ENCODE measurements at regions of chr20 and their contacts with region 1.

Region 1: GRCh38 chr20:45293041-45294002 is 13.3 kb upstream of the RBPJL start:
- DNase-seq: peak; percentile 91
- ATAC-seq: peak; percentile 92
- H3K4me3 Mint-ChIP-seq: peak overlapping the region; percentile 69
- H3K27ac Mint-ChIP-seq: no peak overlapping the region
- H3K4me1 Mint-ChIP-seq: peaks cover 2% of the 10 kb centered on the region
- H3K27me3 Mint-ChIP-seq: peaks cover 31% of the 10 kb centered on the region
- CTCF ChIP-seq: peak; percentile 98

Region 2: DNA sequence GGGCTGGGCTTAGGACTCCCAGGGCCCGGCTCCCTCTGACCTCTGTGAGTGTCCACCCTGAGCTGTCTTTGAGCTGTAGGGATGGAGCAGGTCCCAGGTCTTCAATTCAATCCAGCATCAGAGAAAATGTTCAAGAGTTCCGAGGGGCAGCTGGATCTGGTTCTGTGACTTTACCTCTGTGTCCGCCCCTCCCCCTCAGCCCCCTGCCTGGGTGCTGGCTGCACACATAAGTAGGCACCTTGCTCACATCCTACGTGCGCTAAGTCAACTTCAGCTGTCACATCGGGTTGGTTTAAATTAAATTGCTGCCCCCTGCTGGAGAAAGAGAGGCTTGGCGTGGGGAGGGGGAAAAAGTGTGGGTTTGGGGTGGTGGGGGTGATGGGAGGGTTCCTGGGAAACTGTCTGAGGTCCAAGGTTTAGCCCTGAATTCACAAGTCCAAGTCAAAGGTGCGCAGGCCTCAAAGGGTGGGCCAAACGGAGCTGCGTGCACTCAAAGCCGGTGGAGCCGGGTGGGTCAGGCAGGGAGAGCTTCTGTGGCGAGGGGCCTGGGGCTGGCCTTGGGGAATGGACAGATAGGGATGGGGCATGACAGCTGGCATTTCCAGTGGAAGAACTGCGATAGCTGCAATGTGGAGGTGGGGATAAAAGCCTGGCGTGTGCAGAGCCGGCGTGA is 181.4 kb before region 1 on chr20:
- CTCF ChIA-PET with region 1: interaction called, 17 read pairs
- POLR2A ChIA-PET with region 1: no interaction called
- intact Hi-C with region 1: no loop called
- DNase-seq: peak; percentile 53
- ATAC-seq: peak; percentile 43
- H3K4me3 Mint-ChIP-seq: no peak overlapping the region
- H3K27ac Mint-ChIP-seq: no peak overlapping the region
- H3K4me1 Mint-ChIP-seq: peaks cover 17% of the 10 kb centered on the region
- H3K27me3 Mint-ChIP-seq: no peaks in the 10 kb centered on the region
- CTCF ChIP-seq: peak; percentile 76

Region 3: GRCh38 chr20:45163083-45163803 is 130.1 kb before region 1 on chr20:
- CTCF ChIA-PET with region 1: interaction called, 11 read pairs
- POLR2A ChIA-PET with region 1: interaction called, 3 read pairs
- intact Hi-C with region 1: no loop called
- DNase-seq: no peak
- ATAC-seq: no peak
- H3K4me3 Mint-ChIP-seq: no peak overlapping the region
- H3K27ac Mint-ChIP-seq: no peak overlapping the region
- H3K4me1 Mint-ChIP-seq: no peaks in the 10 kb centered on the region
- H3K27me3 Mint-ChIP-seq: peaks cover 44% of the 10 kb centered on the region
- CTCF ChIP-seq: no peak

Region 4: GRCh38 chr20:45268531-45268930 is 24.8 kb before region 1 on chr20:
- CTCF ChIA-PET with region 1: interaction called, 20 read pairs
- POLR2A ChIA-PET with region 1: no interaction called
- intact Hi-C with region 1: no loop called
- DNase-seq: no peak
- ATAC-seq: no peak
- H3K4me3 Mint-ChIP-seq: no peak overlapping the region
- H3K27ac Mint-ChIP-seq: no peak overlapping the region
- H3K4me1 Mint-ChIP-seq: no peaks in the 10 kb centered on the region
- H3K27me3 Mint-ChIP-seq: peaks cover 28% of the 10 kb centered on the region
- CTCF ChIP-seq: no peak

Region 5: GRCh38 chr20:45311589-45312211 is 18.4 kb after region 1 on chr20:
- CTCF ChIA-PET with region 1: interaction called, 29 read pairs
- POLR2A ChIA-PET with region 1: no interaction called
- intact Hi-C with region 1: no loop called
- DNase-seq: peak; percentile 74
- ATAC-seq: peak; percentile 80
- H3K4me3 Mint-ChIP-seq: no peak overlapping the region
- H3K27ac Mint-ChIP-seq: no peak overlapping the region
- H3K4me1 Mint-ChIP-seq: peaks cover 5% of the 10 kb centered on the region
- H3K27me3 Mint-ChIP-seq: peaks cover 57% of the 10 kb centered on the region
- CTCF ChIP-seq: peak; percentile 93

Region 6: GRCh38 chr20:45347936-45348778 is 54.8 kb after region 1 on chr20 and contains the start of gene SDC4:
- CTCF ChIA-PET with region 1: interaction called, 20 read pairs
- POLR2A ChIA-PET with region 1: no interaction called
- intact Hi-C with region 1: no loop called
- DNase-seq: peak; percentile 68
- ATAC-seq: peak; percentile 80
- H3K4me3 Mint-ChIP-seq: peak within 1 kb of the TSS; percentile 79
- H3K27ac Mint-ChIP-seq: peak within 1 kb of the TSS; percentile 81
- H3K4me1 Mint-ChIP-seq: peaks cover 40% of the 10 kb centered on the region
- H3K27me3 Mint-ChIP-seq: peaks cover 2% of the 10 kb centered on the region
- CTCF ChIP-seq: no peak
- total RNA-seq, gene SDC4: 21.1 to 22.0 TPM

Region 7: GRCh38 chr20:45523821-45524220 is 230.5 kb after region 1 on chr20:
- CTCF ChIA-PET with region 1: no interaction called
- POLR2A ChIA-PET with region 1: no interaction called
- intact Hi-C with region 1: no loop called
- DNase-seq: no peak
- ATAC-seq: no peak
- H3K4me3 Mint-ChIP-seq: no peak overlapping the region
- H3K27ac Mint-ChIP-seq: no peak overlapping the region
- H3K4me1 Mint-ChIP-seq: no peaks in the 10 kb centered on the region
- H3K27me3 Mint-ChIP-seq: peaks cover 34% of the 10 kb centered on the region
- CTCF ChIP-seq: no peak

Measured in activated CD8-positive, alpha-beta T cell treated with anti-CD3 and anti-CD28 coated beads for 36 hours (primary cell).